AG04449 (cell line): ENCODE measurements at regions of chr9 and their contacts with region 1.

Region 1: DNA sequence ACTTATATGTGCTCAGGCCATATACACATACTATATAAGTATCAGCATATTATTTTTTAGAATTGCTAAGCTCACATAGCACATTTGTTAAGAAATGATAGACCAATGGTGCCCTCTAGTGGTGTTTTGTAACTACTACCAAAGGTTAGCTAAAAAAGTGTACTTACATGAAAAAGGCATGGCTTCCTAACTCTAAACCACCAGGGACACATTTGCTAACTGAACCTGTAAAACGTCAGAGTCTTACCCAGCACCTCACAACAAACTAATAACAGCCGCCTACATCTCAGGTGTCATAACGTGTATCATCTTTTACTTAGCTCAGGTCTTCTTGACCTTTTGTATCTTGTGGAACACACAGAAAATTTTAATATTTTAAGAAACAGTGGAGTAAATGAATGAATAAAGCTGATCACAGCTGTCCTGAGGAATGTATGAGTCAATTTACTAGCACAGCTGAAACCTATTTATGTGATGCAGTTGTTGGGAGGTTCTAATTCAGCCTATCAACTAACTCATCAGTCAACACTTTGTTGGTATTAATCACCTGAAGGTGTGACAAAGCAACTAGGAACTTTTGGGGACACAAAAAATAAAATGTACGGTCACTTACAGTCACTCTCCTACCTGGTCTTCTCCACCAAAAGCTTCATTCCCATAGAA is 72.9 kb downstream of the BAAT start:
- DNase-seq: peak; percentile 52
- H3K4me3 ChIP-seq: no peak overlapping the region
- CTCF ChIP-seq: peak; percentile 53

Region 2: DNA sequence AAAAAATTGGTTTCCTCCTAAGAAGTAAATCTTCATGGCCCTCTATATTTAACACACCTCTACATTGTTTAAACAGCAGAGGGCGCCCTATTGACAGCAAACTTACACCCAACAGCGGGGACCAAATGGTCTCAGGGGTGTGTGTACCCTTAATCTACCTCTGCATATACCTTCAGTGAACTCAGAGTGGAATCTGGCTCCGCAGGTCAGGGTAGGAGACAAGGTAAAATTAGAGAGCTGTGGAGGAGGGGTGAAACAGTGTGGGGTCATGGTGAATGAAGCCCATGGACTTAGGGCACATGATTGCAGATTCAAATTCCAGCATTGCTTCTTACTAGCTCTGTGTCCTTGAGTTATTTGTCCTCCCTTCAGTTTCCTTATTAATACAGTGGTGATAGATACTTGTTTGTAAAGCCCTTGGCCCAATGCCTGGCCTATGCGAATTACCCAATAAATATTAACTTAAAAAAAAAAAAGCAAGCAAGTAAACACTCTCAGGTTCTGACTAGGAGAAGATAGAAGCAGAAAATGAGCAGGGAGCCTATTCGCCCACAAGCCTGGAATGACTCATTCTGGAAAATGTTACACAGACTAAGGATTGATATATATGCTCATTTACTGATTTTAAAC is 611.1 kb before region 1 on chr9:
- CTCF ChIA-PET with region 1: interaction called, 12 read pairs
- POLR2A ChIA-PET with region 1: no interaction called
- DNase-seq: no peak
- H3K4me3 ChIP-seq: no peak overlapping the region
- CTCF ChIP-seq: no peak

Region 3: GRCh38 chr9:100714372-100715099 is 597.4 kb before region 1 on chr9:
- CTCF ChIA-PET with region 1: interaction called, 42 read pairs
- POLR2A ChIA-PET with region 1: no interaction called
- DNase-seq: no peak
- H3K4me3 ChIP-seq: no peak overlapping the region
- CTCF ChIP-seq: peak; percentile 87

Region 4: GRCh38 chr9:101119206-101119819 is 192.6 kb before region 1 on chr9:
- CTCF ChIA-PET with region 1: interaction called, 22 read pairs
- POLR2A ChIA-PET with region 1: no interaction called
- DNase-seq: no peak
- H3K4me3 ChIP-seq: no peak overlapping the region
- CTCF ChIP-seq: peak; percentile 80

Region 5: DNA sequence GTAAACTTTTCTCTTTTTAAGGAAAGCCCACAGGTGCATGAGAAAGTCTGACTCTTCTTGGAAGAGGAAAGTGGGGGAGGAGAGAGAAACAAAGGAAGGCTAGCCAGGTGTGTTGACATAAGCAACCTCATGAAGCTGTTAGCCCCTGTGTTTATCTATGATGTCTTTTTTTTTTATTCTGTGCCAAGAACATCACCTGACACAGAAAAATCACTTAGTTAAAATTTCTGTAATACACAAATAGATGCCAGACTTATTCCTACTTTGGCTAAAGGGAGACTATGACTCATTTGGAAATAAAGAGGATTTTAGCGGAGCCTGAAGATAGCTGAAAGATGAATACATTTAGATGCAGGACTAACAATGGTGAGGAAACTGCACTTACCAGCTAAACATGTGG is 14.6 kb after region 1 on chr9:
- CTCF ChIA-PET with region 1: interaction called, 19 read pairs
- POLR2A ChIA-PET with region 1: no interaction called
- DNase-seq: no peak
- H3K4me3 ChIP-seq: no peak overlapping the region
- CTCF ChIP-seq: no peak

Region 6: DNA sequence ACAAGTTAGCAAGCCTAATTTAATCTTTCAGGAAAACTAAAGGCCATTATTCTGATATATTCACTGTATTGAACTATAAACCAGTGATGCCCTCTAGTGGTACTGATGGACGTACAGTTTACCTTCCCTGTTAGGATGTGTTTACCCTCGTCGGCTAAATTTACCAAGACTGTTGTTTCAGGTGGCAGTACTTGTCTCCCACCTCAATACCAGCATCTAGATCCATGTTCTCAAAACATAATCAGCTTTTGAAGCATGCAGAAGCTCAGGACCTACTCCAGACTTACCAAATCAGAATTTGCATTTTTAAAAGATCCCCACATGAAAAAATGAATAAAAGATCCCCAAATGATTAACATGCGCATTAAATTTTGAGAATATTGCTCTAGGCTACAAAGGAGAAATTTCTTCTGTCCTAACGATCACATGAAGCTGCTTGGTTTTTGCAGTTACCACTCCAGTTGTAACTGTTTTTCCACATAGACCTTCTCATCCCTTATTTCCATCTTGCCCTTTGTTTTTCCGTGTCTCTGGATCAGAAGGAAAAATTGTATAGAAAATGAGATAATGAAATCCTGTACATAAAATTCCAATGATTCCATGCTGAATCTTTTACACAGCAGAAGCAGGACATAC is 76.1 kb after region 1 on chr9:
- CTCF ChIA-PET with region 1: interaction called, 10 read pairs
- POLR2A ChIA-PET with region 1: no interaction called
- DNase-seq: no peak
- H3K4me3 ChIP-seq: no peak overlapping the region
- CTCF ChIP-seq: peak; percentile 65

Region 7: DNA sequence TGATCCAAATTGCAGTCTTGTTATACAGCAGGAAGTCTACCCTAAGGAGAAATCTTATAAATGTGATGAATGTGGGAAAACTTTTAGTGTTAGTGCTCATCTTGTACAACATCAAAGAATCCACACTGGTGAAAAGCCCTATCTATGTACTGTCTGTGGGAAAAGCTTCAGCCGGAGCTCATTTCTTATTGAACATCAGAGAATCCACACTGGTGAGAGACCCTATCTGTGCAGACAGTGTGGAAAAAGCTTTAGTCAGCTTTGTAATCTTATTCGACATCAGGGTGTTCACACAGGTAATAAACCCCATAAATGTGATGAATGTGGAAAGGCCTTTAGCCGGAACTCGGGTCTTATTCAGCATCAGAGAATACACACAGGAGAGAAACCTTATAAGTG is 97.2 kb after region 1 on chr9:
- CTCF ChIA-PET with region 1: no interaction called
- POLR2A ChIA-PET with region 1: no interaction called
- DNase-seq: no peak
- H3K4me3 ChIP-seq: no peak overlapping the region
- CTCF ChIP-seq: no peak